ENCODE measurements at regions of chr17 and their contacts with region 1.

Region 1: DNA sequence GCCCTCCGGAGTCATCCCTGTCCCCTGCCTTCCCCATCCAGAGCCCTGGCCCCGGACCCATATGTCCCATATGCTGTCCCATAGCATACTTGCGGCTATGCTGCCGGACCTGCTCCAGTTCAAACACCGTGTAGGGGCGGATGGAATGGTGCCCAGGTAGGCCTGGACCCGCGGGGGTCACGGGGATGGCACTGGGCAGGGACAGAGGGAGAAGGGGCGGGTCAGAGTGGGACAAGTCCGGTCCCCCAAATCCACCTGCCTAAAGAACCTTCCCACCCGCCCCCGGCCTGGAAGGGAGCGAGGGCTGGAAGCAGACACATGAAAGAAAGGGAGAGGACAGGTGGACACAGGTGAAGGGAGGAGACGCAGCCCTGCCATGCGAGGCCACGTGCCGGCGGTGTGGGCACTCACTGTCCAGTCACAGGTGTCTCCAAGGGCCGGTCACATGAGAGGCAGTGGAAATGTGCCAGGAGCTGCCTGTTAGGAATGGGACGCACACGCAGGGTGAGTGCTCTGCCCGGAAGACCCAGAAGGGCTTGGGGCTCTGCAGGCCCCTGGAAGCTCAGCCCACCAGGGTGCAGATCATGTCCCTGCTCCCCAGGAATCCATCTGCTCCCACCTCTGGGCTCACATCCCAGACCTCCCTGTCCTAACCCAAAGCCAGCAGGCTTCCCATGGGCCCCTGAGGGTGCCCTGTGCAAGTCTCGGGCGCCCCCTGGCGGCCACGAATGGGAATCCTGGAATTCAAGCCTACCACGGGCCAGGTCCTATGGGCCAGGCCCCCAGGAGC is 14.0 kb downstream of the UBALD2 start:
- DNase-seq: peak; percentile 94
- ATAC-seq: peak; percentile 84

Region 2: GRCh38 chr17:76141212-76142038 is 137.7 kb before region 1 on chr17 and contains the start of gene FOXJ1:
- intact Hi-C with region 1: no loop called
- DNase-seq: peak; percentile 92
- ATAC-seq: peak; percentile 89
- total RNA-seq, gene FOXJ1: not detected

Region 3: DNA sequence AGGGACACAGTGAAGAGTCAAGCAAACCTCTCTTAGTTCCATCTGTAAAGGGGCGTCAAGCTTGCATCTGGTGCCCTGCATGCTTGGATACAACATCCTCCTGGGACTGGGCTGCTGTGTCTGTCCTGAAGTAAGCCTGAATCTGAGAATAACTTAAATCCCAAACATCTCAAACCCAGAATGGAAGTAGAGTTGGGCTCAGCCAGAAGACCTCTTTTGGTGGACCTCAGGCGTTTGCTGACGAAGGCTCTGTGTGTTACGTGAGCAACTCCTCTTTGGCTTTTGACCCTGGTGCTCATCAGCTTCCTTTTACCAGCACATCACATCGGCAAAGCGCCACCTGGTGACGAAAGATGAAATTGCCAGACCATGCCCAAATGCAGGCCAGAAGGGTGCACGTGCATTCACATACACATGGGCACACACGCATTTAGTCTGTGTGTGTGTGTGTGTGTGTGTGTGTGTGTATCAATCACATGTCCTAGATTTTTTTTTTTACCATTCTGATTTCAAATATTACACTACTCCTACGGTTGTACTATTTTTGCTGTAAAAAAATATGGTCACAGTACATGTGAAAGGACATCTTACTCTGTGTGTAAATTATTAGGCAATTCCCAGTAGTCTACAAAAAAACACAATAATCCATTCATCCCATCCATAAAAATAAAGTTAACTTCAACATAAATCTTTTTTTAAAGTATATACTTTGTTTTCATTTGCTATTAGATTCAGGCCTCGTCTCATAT is 97.0 kb before region 1 on chr17:
- intact Hi-C with region 1: loop called (anchors 5 kb)
- DNase-seq: peak; percentile 93
- ATAC-seq: peak; percentile 87

Measured in Right ventricle myocardium inferior (tissue), 1 donor.